ENCODE measurements at regions of chr3 and their contacts with region 1.

Region 1: DNA sequence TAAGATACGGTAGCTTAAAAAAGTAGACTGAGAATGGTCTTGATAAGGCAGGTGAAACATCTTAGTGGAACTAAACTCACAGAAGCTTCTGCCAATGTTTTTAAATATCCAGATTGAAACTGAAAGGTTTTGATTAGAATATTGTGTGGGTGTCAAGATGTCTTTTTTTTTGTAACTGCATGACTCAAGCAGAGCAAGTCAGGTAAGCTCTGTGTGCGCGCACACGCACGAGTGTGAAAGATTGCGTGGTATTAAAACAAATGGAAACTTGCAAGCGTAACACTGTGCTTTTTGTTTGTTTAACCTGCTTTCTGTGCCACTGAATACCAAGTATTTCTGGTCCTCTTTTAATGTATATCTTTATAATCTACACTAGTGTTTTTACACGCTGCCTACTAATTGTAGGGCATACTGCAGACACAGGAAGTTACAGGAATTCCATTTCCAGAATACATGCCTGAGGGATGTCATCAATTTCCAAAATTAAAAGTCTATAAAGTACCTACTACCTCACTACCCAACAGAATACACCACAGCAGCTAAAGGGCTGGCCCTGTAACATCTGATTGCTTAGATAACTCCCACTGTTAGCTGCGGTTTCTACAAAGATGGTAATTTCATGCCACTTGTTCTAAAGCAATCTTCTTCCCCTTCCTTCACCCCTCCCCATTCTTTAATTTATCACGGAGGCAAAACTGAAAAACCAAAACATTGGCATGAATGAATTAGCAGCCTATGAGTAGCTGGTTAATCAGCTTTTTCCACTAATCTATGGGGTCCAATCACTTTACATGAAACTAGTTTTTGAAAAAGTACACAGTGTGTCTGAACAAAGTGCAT is 472.8 kb downstream of the SHQ1 start:
- DNase-seq: no peak
- H3K4me3 Mint-ChIP-seq: peak overlapping the region; percentile 54
- H3K27ac Mint-ChIP-seq: peak overlapping the region; percentile 86
- H3K4me1 Mint-ChIP-seq: peaks cover 61% of the 10 kb centered on the region
- H3K27me3 Mint-ChIP-seq: no peaks in the 10 kb centered on the region

Region 2: DNA sequence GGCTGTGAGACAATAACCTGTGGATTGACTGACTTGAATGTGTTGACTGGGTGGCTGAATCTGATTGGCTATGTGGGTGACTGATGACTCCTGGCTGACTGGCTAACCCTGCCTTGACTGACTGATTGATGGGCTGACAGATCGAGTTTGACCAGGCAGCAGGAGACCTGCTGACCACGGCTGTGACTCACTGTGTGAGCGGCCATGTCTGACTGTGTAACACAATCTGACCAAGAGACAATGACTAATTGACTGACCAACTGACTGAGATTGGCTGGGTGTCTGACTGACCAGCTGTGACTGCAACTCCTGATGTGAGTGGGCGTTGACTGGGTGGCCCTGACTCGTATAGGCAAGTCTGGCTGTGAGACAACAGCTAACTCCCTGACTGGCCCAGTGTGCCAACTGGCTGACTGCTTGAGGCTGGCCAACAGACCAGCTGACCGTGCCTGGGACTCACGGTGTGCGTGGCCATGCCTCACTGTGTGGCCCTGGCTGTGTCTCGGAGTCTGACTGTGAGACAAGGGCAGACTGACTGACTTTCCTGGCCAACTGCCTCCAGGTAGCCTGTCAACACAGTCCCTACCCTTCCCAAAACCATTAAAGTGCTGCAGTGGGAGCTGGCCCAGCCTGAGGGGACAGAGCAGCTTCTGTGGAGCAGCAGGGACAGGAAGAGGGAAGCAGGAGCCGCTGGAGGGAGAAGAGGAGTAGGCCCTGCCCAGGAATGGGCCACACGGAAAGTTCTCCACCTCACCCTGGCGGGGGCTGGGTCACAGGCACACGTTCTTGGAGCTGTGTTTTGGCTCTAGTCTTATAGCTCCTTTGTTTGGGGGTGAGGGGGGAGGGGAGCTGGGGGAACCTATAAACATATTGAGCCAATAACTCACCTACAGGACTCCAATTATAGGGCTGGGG is 36.1 kb before region 1 on chr3:
- intact Hi-C with region 1: loop called (anchors 1 kb)
- DNase-seq: no peak
- H3K4me3 Mint-ChIP-seq: no peak overlapping the region
- H3K27ac Mint-ChIP-seq: no peak overlapping the region
- H3K4me1 Mint-ChIP-seq: peaks cover 29% of the 10 kb centered on the region
- H3K27me3 Mint-ChIP-seq: no peaks in the 10 kb centered on the region

Region 3: DNA sequence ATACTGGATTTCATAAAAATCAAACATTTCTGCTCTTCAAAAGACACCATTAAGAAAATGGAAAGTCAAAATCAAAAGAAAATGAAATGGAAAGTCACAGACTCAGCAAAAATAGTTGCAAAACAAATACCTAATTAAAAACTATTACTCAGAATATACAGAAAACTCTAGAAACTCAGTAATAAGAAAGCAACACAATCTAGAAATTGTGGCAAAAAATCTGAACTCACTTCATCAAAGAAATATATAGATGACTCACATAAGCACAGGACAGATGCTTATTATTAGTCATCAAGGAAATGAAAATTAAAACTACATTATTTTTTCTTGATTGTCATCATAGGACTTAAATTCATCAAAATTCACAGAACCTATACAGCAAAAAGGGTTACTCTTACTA is 42.8 kb after region 1 on chr3:
- intact Hi-C with region 1: loop called (anchors 2 kb)
- DNase-seq: no peak
- H3K4me3 Mint-ChIP-seq: no peak overlapping the region
- H3K27ac Mint-ChIP-seq: peak overlapping the region; percentile 40
- H3K4me1 Mint-ChIP-seq: peaks cover 63% of the 10 kb centered on the region
- H3K27me3 Mint-ChIP-seq: no peaks in the 10 kb centered on the region

Region 4: GRCh38 chr3:72447059-72447946 is 71.8 kb after region 1 on chr3:
- intact Hi-C with region 1: loop called (anchors 2 kb)
- DNase-seq: peak; percentile 92
- H3K4me3 Mint-ChIP-seq: peak overlapping the region; percentile 66
- H3K27ac Mint-ChIP-seq: peak overlapping the region; percentile 60
- H3K4me1 Mint-ChIP-seq: peaks cover 52% of the 10 kb centered on the region
- H3K27me3 Mint-ChIP-seq: no peaks in the 10 kb centered on the region

Region 5: DNA sequence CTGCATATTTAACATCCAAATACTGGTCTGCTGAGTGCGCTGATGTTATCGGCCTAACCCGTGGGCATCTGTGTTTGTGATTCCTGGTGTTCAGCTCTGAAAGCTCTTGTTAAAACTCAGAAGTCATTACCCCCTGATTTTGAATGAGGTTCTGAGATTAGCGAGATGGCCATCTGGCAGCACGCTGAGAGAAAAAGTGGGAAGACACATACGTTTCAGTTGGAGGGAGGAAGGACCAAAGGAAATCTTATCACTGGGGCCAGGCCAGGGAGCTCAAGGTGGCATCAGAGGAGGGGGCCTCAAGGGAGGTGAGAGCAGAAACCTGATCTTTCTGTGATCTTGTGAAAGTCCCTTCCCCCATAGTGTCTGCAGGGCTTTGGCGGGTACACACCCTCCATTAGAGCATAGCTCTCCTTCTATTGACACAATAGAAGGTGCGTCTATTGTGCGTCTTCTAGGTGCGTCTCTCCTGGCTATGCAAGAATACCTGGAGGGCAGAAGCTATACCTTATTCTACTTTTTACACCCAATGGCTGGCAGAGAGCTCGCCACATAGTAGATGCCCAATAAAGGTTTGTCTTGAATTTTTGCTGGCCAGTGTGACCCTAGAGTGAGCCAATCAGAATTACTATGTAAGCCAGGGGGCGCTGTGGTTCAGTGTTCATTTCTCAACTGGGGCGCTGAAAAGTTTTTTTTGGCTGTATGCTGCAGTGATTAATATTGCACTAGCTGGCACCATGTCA is 290.4 kb after region 1 on chr3:
- intact Hi-C with region 1: no loop called
- DNase-seq: peak; percentile 19
- H3K4me3 Mint-ChIP-seq: no peak overlapping the region
- H3K27ac Mint-ChIP-seq: no peak overlapping the region
- H3K4me1 Mint-ChIP-seq: no peaks in the 10 kb centered on the region
- H3K27me3 Mint-ChIP-seq: no peaks in the 10 kb centered on the region